AG04449 (cell line): ENCODE measurements at regions of chr22 and their contacts with region 1.

Region 1: DNA sequence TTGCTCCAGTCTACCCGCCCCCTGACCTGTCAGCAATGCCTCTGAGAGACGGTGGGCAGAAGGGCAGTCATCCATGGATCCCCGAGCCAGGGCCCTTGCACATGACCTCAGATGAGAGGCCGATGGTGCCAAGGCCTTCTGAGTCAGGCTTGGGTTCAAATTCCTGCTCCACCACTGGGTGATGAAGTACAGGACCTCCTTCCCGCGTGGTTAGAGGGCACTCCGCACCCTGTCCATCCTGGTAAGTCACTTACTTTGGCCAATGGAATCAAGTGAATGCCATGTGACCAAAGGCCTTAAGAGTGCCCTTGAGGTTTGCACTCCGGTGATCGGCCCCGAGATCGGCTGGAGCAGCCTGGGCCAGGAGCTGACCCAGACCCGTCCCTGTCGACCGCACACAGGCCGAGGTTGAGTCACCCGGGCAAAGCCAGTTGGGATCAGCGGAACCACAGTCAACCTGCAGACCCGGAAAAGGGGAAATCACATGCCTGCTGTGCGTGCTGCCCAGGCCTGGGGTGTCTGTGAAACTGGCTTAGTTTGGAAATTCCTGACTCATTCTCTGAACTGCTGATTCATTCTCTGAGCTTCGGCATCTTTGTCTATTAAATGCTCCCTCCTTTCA is 48.9 kb downstream of the RTL6 start:
- DNase-seq: peak; percentile 59
- H3K4me3 ChIP-seq: no peak overlapping the region
- CTCF ChIP-seq: no peak

Region 2: DNA sequence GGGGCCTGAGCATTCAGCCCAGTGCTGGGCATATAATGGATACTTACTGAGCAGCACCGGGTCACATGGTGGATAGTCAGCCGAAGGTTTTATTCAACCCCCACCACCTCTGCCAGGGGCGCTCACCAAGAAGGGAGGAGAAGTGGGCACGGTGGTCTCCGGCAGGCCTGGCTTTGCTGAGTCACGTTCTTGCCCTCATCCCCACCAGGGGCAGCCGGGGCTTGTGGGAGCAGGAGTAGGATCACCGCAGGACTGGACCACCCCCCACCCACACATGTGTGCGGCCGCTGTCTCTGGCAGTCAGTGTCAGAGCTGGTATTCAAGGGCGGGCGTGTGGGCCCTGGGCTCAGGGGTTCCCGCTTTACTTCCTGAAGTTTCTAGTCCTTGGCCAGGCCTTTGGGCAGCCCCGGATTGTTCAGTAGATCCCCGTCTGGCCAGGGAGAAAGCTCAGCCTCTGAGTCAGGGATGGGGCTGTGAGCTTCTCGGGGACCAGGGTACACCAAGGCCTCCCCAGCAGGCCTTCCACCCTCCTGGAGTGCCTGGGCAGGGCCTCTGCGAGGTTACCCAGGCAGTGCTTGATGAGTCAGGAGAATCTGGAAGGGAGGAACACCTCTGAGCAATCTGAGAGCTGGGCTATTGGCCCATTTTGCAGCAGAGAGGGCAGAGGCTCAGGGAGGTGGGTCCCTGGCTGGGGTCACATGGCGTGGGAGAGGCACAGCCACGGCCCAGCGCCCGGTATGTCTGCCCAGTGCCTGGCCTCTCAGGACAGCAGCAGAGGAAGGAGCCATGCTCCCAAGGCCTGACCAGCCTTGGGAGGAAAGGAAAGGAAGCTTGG is 11.7 kb before region 1 on chr22:
- CTCF ChIA-PET with region 1: no interaction called
- POLR2A ChIA-PET with region 1: no interaction called
- DNase-seq: no peak
- H3K4me3 ChIP-seq: no peak overlapping the region
- CTCF ChIP-seq: no peak

Region 3: DNA sequence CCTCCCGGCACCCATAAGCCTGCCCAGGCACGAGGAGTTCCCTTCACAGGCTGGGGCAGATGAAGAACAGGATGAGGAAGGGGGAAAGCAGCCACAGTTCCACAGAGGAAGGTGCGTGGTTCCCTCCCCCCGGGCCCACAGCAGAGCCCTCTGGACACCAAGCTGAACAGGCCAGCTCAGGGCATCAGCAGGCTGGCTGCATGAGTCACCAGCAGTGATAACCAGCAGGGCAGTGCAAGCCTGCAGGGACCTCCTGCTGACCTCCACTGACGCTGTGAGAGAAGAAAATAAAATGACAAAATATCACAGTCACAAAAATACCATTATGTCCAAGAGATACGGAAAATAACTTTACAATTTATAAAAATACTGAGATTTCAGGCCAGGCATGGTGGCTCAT is 37.4 kb after region 1 on chr22:
- CTCF ChIA-PET with region 1: no interaction called
- POLR2A ChIA-PET with region 1: no interaction called
- DNase-seq: no peak
- H3K4me3 ChIP-seq: no peak overlapping the region
- CTCF ChIP-seq: no peak

Region 4: DNA sequence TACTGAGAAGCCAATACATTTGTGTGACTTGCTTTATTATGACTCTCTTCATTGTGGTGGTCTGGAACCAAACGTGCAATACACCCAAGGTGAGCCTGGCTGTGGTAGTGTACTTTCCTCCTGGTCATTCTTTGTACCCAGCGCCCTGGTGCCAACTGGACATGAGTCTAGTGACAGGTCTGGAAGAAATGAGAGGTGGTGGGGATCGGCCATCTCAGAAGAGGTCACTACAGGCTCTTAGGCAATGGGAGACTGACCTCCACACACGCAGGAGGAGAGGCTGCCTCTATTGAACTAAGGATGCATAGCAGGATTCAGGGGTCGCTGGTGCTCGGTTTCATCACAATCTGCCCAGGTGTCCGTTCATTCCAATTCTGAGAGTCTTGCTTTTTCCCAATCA is 105.2 kb after region 1 on chr22:
- CTCF ChIA-PET with region 1: no interaction called
- POLR2A ChIA-PET with region 1: interaction called, 10 read pairs
- DNase-seq: no peak
- H3K4me3 ChIP-seq: no peak overlapping the region
- CTCF ChIP-seq: no peak